ENCODE measurements at regions of chr2 and their contacts with region 1.

Region 1: GRCh38 chr2:205650450-205650849 is 31.9 kb upstream of the NRP2 start:
- DNase-seq: no peak
- CTCF ChIP-seq: no peak

Region 2: GRCh38 chr2:205660521-205661124 is 10.2 kb after region 1 on chr2:
- CTCF ChIA-PET with region 1: interaction called, 12 read pairs
- POLR2A ChIA-PET with region 1: no interaction called
- DNase-seq: peak; percentile 31
- CTCF ChIP-seq: no peak